Left ventricle myocardium superior (tissue), 1 donor: ENCODE measurements at regions of chr11 and their contacts with region 1.

Region 1: DNA sequence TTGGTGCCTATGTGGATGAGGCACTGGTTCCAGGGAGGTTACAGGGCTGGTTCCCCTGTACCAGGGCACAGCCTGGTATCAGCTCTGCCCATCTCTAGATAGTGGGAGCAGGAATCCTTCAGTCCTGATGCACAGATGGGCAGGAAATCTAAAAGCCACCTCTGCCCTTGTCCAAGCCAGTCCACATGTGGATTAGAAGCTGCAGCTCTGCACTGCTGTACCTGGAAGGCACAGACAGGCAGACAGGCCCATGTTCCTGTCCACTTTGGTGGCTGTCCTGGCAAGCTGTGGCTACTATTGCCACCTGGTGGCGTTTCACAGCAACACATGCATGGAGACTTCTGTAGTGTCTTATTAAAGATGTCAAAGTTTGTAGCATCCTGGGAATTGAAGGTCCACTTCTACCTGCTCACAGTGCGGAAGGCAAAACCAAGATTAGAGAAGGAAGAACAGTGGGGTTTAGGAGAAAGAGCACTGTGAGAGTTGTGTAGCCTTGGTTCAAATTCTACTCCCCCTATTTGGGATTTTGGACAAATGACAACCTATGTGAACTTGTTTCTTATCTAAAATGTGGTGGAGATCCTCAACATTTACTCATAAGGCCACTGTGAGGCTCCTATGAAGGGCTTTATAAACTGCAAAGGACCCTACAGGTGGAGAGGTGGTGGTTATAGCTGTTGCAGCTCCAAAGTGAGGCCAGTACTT is 30.1 kb downstream of the NAV2 start:
- DNase-seq: peak; percentile 84
- ATAC-seq: peak; percentile 90

Region 2: DNA sequence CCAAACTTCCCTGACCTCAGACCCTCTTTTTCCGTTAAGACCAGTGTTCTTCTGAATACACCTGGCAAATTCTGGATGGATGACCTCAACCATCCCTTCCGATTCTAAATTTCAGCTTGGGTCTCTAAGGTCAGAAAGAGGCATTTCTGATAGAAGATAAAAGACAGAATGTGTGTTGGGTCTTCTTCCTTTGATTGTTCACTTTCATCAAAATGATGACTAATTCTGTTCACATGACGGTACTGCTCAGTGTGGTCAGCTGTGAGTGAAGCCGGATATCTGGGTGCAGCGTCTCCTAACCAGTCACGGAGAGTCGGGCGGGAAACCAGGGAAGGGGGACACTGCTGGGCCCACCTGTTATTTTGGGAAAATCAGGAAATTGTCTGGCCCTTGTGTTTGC is 181.7 kb before region 1 on chr11:
- intact Hi-C with region 1: loop called (anchors 5 kb)
- DNase-seq: no peak
- ATAC-seq: no peak

Region 3: GRCh38 chr11:19573666-19574065 is 169.1 kb before region 1 on chr11:
- intact Hi-C with region 1: loop called (anchors 5 kb)
- DNase-seq: peak; percentile 81
- ATAC-seq: peak; percentile 84

Region 4: GRCh38 chr11:19800162-19800561 is 57.4 kb after region 1 on chr11:
- intact Hi-C with region 1: loop called (anchors 10 kb)
- DNase-seq: peak; percentile 36
- ATAC-seq: peak; percentile 44

Region 5: GRCh38 chr11:19853016-19853415 is 110.3 kb after region 1 on chr11:
- intact Hi-C with region 1: no loop called
- DNase-seq: no peak
- ATAC-seq: peak; percentile 37

Region 6: DNA sequence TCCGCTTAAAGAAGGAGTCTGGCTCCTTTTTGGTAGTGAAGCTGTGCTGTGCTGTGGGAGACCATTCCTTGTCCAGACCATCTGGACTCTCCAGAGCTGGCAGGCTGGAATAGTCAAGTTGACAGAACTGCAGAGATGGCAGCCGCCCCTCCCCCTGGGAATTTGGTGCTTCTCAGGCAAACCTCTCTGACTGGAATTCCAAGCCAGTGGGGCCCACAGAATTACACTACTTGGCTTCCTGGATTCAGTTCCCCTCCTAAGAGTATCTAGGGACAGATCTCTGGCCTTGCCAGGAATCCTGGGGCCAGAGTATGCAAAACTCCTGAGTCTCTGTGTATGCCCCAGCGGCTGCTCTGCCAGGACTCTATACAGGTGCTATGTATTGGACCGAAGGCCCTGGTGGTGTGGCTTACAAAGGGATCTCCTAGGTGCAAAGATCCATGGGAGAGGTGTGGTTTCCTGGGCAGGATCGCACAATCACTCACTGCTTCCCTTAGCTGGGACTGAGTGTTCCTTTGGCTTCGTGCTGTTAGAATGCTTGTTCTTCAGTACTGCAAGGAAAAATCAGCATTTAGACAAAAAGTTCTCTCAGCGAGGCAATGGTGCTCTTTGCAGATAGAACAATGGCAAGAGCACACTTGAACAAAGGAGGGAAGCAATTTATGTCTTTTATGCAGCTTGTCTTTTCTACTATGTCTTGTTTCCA is 731.6 kb after region 1 on chr11:
- intact Hi-C with region 1: no loop called
- DNase-seq: no peak
- ATAC-seq: peak; percentile 86